Activated T-helper 2 cell treated with anti-CD3 and anti-CD28 coated beads, Interferon-gamma antibody, Interleukin-2, Interleukin-4, amounts not matched to agents 10 μg/mL and 5 μg/mL and 100 μg/mL, durations not matched to agents 14 hours and 24 hours and 36 hours (primary cell): ENCODE measurements at regions of chr15 and their contacts with region 1.

Region 1: GRCh38 chr15:78872972-78873792 is 492 bp downstream of the MORF4L1 start:
- DNase-seq: peak; percentile 89
- H3K4me3 Mint-ChIP-seq: peak overlapping the region; percentile 97
- H3K27ac Mint-ChIP-seq: peak overlapping the region; percentile 100
- H3K4me1 Mint-ChIP-seq: peaks cover 30% of the 10 kb centered on the region
- H3K27me3 Mint-ChIP-seq: no peaks in the 10 kb centered on the region

Region 2: GRCh38 chr15:78540141-78540928 is 332.8 kb before region 1 on chr15 and contains the start of gene PSMA4:
- intact Hi-C with region 1: loop called (anchors 2 kb)
- DNase-seq: peak; percentile 92
- H3K4me3 Mint-ChIP-seq: peak within 1 kb of the TSS; percentile 97
- H3K27ac Mint-ChIP-seq: peak within 1 kb of the TSS; percentile 95
- H3K4me1 Mint-ChIP-seq: peaks cover 29% of the 10 kb centered on the region
- H3K27me3 Mint-ChIP-seq: peaks cover 1% of the 10 kb centered on the region
- total RNA-seq, gene PSMA4: 330 and 331 TPM in 2 replicates

Region 3: DNA sequence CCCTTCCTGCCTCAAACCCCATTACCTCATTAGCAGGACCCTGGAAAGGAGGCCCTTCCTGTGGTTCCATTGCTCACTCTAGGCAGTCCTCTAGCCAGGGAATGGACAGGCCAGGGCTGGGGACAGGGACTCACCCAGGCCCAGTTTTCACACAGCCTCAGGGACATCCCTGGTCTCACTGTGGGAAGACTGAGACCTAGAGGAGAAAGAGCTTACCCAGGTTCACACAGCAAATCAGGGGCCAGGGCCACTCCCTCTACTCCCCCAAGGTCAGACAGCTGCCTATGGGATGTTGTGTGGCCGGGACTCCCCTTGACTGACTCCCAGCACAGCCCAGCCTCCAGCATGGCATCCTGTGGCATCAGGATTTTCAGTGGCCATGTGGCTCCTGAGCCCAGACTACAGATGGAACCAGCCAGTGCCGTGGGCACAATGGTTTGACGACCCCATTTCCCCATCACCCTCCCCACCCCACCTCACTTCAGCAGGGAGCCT is 111.2 kb before region 1 on chr15:
- intact Hi-C with region 1: loop called (anchors 5 kb)
- DNase-seq: no peak
- H3K4me3 Mint-ChIP-seq: no peak overlapping the region
- H3K27ac Mint-ChIP-seq: peak overlapping the region; percentile 86
- H3K4me1 Mint-ChIP-seq: peaks cover 22% of the 10 kb centered on the region
- H3K27me3 Mint-ChIP-seq: no peaks in the 10 kb centered on the region

Region 4: GRCh38 chr15:78811124-78811824 is 61.9 kb before region 1 on chr15 and contains the start of gene ADAMTS7:
- intact Hi-C with region 1: loop called (anchors 5 kb)
- DNase-seq: peak; percentile 25
- H3K4me3 Mint-ChIP-seq: peak within 1 kb of the TSS; percentile 83
- H3K27ac Mint-ChIP-seq: no peak within 1 kb of the TSS
- H3K4me1 Mint-ChIP-seq: peaks cover 7% of the 10 kb centered on the region
- H3K27me3 Mint-ChIP-seq: peaks cover 40% of the 10 kb centered on the region
- total RNA-seq, gene ADAMTS7: 6.9 and 7.2 TPM in 2 replicates

Region 5: GRCh38 chr15:78830514-78831228 is 42.5 kb before region 1 on chr15:
- intact Hi-C with region 1: no loop called
- DNase-seq: no peak
- H3K4me3 Mint-ChIP-seq: peak overlapping the region; percentile 13
- H3K27ac Mint-ChIP-seq: no peak overlapping the region
- H3K4me1 Mint-ChIP-seq: no peaks in the 10 kb centered on the region
- H3K27me3 Mint-ChIP-seq: peaks cover 25% of the 10 kb centered on the region

Region 6: DNA sequence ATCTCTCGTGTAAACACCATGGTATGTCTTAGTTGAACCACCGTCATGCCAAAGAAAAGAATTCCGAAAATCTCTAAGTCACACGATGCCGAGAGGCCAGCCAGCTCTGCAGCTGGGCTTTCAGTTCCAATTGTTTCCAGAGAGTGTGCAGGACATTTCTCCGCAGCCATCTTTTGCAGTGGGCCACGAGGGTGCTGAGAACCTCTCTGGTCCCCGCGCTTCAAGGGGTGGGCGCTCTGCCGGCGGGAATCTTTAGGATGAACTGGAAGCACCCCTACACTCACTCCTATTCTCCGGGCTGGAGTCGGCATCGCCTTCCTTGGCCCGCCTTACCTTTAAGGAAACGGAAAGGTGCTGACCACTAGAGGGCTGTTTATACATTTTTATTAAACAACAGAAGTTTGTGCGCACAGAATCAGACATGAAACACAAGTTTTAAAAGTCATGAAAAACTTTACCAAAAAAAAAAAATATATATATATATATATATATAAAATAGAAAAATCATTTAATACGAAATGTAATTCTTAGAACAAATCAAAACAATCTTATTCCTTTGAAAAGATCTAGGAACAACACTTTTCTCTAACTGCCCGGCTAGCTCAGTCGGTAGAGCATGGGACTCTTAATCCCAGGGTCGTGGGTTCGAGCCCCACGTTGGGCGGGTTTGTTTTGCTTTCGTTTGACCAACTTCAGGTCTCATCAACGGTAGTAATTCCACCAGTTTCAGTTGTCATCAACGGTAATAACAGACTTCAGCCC is 13.0 kb before region 1 on chr15:
- intact Hi-C with region 1: loop called (anchors 1 kb)
- DNase-seq: peak; percentile 62
- H3K4me3 Mint-ChIP-seq: peak overlapping the region; percentile 82
- H3K27ac Mint-ChIP-seq: peak overlapping the region; percentile 48
- H3K4me1 Mint-ChIP-seq: peaks cover 5% of the 10 kb centered on the region
- H3K27me3 Mint-ChIP-seq: peaks cover 8% of the 10 kb centered on the region

Region 7: DNA sequence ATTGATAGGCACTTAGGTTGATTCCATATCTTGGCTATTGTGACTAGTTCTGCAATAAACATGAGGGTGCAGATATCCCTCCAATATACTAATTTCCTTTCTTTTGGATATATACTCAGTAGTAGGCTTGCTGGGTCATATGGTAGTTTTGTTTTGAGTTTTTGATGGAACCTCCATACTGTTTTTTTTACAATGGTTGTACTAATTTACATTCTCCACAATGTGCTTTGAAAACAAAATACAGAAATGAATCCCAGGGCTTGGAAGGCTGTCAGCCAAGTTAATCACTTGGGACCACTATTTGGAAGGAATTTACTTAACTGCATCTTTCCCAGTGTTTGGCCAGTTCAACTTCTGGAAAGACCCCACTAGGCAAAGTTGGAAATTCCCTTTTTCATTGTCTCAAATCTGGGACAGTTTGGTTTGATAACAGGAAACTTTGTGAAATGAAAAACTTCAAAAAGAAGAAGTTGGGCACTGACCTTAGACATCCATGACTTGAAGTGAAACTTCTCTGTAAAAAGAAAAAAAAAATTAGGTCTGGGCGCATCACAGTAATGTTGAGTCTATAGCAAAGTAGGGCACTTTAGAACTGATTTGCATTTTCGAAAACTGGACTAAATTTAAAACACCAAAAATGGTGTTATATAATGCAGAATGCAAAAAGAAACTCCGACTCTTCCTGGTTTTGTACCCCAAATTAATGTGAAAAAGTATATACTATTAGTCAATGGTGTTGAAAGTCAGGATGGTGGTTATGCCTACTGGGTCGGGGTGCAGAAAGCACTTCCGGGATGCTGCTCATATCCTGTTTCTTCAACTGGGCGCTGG is 65.7 kb after region 1 on chr15:
- intact Hi-C with region 1: loop called (anchors 5 kb)
- DNase-seq: no peak
- H3K4me3 Mint-ChIP-seq: peak overlapping the region; percentile 35
- H3K27ac Mint-ChIP-seq: peak overlapping the region; percentile 75
- H3K4me1 Mint-ChIP-seq: peaks cover 24% of the 10 kb centered on the region
- H3K27me3 Mint-ChIP-seq: peaks cover 9% of the 10 kb centered on the region

Region 8: DNA sequence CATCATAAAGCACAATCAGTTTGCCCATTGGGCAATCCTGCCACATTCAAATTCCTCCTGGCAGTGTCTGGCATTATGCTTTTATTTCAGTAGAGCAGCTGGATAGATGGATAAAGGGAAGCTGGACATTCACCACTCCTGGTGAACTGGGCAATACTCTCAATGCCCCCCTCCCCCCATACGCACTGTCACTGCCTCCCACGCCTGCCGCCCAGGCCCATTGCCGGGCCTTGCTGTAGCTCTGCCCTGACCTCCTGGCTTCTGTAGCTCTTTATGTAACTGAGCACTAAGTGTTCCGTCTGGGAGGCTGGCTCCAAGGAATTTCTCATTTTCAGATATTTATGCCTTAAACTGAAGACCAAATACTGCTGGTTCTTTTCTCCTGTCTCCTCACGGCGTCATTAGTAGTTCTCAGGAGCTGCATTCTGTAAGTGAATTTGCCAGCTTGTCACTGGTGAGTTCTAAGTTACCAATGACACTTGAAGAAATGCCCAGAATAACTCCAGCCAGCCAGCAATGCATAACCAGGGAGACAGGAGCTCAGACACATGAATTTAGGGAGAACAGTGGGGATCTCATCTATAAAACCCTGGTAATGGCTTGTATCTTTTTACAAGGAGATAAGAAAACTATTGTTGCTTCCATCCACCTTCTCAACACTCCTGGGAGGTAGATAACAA is 242.9 kb after region 1 on chr15:
- intact Hi-C with region 1: no loop called
- DNase-seq: no peak
- H3K4me3 Mint-ChIP-seq: no peak overlapping the region
- H3K27ac Mint-ChIP-seq: no peak overlapping the region
- H3K4me1 Mint-ChIP-seq: no peaks in the 10 kb centered on the region
- H3K27me3 Mint-ChIP-seq: peaks cover 10% of the 10 kb centered on the region